Activated CD8-positive, alpha-beta T cell treated with anti-CD3 and anti-CD28 coated beads for 36 hours (primary cell): ENCODE measurements at regions of chr15 and their contacts with region 1.

Region 1: DNA sequence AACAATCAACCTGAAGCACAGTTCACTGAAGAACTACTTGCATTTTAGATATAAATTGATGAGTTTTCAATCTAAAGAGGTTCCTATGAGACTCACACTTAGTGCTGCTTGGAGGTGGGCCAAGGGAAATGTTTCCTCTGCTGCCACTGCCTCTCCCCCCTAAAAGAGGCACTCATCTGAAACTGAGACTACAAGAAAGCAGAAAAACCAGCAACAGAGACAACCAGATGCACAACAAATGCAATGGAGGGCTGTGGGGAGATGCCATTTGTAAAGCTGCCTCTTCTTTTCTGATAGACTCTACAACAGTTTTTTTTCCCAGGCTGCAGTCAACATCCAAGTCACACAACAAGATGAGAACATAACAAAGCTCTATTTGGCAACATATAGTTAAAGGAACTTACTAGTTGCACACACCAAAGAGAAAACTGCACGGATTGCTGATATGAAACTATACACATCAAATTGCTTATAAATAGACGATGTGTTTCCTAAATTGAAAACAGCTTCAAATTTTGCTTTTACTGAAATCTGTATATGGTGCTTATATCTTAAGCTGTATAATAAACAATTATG is 11.0 kb downstream of the TSPAN3 start:
- DNase-seq: peak; percentile 53
- ATAC-seq: peak; percentile 80
- H3K4me3 Mint-ChIP-seq: peak overlapping the region; percentile 8
- H3K27ac Mint-ChIP-seq: peak overlapping the region; percentile 10
- H3K4me1 Mint-ChIP-seq: peaks cover 52% of the 10 kb centered on the region
- H3K27me3 Mint-ChIP-seq: no peaks in the 10 kb centered on the region
- CTCF ChIP-seq: no peak

Region 2: DNA sequence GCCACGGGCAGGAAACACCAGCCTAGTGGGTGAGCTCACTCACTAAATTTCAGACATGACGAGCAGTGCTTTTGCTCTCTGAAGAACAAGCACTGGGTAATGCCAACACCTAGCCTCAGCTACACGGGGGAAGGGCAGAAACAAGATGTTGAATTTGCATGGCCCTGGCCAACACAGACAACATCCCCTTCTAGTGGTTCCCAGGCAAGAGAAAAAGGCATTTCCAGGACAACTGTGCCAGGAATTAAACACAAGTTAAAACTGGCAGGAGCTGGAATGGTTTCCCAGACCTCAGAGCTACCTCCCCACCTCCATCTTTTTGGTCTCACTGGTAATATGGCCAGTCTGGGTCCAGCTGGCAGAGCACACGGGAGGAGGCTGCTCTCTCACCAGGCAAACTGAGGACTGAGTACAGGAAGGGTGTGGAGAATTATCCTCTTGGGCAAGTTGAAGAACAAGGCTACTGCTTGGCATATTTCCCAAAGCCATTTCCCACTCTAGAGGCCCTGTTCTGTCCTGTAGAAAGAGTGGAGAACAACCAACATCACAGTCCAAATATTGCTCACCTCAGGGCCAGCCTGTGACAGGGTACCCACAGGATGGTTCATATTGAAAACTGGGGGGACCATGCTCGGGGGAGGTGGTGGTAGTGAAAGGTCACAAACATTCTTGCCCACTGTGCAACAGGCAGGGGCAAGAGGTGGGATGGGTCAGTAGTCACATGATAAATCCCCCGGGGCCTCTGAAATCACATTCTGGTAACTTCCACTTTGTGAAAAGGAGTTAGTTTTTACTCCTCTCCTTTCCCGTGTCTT is 15.4 kb before region 1 on chr15:
- CTCF ChIA-PET with region 1: interaction called, 9 read pairs
- POLR2A ChIA-PET with region 1: interaction called, 44 read pairs
- intact Hi-C with region 1: no loop called
- DNase-seq: no peak
- ATAC-seq: peak; percentile 15
- H3K4me3 Mint-ChIP-seq: no peak overlapping the region
- H3K27ac Mint-ChIP-seq: peak overlapping the region; percentile 37
- H3K4me1 Mint-ChIP-seq: peaks cover 7% of the 10 kb centered on the region
- H3K27me3 Mint-ChIP-seq: no peaks in the 10 kb centered on the region
- CTCF ChIP-seq: no peak

Region 3: GRCh38 chr15:77179541-77179998 is 119.7 kb after region 1 on chr15:
- CTCF ChIA-PET with region 1: no interaction called
- POLR2A ChIA-PET with region 1: no interaction called
- intact Hi-C with region 1: no loop called
- DNase-seq: peak; percentile 40
- ATAC-seq: peak; percentile 67
- H3K4me3 Mint-ChIP-seq: no peak overlapping the region
- H3K27ac Mint-ChIP-seq: peak overlapping the region; percentile 82
- H3K4me1 Mint-ChIP-seq: peaks cover 46% of the 10 kb centered on the region
- H3K27me3 Mint-ChIP-seq: no peaks in the 10 kb centered on the region
- CTCF ChIP-seq: no peak